Activated CD4-positive, alpha-beta T cell treated with anti-CD3 and anti-CD28 coated beads, Interleukin-2, amount 10 ng/mL, durations not matched to agents 7 days and 5 days (primary cell): ENCODE measurements at regions of chr7 and their contacts with region 1.

Region 1: GRCh38 chr7:87199700-87200450 is 19.7 kb downstream of the TMEM243 start:
- DNase-seq: no peak
- H3K4me3 Mint-ChIP-seq: no peak overlapping the region
- H3K27ac Mint-ChIP-seq: peak overlapping the region; percentile 60
- H3K4me1 Mint-ChIP-seq: peaks cover 33% of the 10 kb centered on the region
- H3K27me3 Mint-ChIP-seq: no peaks in the 10 kb centered on the region

Region 2: GRCh38 chr7:87213811-87214210 is 13.9 kb after region 1 on chr7:
- CTCF ChIA-PET with region 1: interaction called, 12 read pairs
- POLR2A ChIA-PET with region 1: no interaction called
- DNase-seq: no peak
- H3K4me3 Mint-ChIP-seq: peak overlapping the region; percentile 2
- H3K27ac Mint-ChIP-seq: peak overlapping the region; percentile 97
- H3K4me1 Mint-ChIP-seq: peaks cover 81% of the 10 kb centered on the region
- H3K27me3 Mint-ChIP-seq: no peaks in the 10 kb centered on the region

Region 3: DNA sequence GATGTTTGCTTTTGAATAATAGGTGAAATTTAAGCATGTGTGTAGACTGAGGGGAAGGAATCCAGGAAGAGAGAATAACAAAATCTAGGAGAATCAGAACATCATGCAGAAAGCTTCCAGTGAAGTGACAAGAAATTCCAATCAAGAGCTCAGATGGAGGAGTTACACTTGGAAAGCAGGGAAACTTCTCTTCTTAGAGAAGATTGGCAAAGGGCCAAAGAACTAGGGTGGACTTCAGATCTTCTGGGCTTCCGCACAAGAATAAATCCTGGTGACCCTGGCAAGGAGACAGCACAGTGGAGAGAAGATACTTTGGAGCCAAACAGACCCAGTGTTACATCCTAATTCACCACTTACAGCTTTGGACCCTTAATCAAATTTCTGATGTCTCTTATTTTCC is 52.3 kb after region 1 on chr7:
- CTCF ChIA-PET with region 1: no interaction called
- POLR2A ChIA-PET with region 1: no interaction called
- DNase-seq: no peak
- H3K4me3 Mint-ChIP-seq: no peak overlapping the region
- H3K27ac Mint-ChIP-seq: no peak overlapping the region
- H3K4me1 Mint-ChIP-seq: no peaks in the 10 kb centered on the region
- H3K27me3 Mint-ChIP-seq: peaks cover 37% of the 10 kb centered on the region